ENCODE measurements at regions of chr11 and their contacts with region 1.

Region 1: GRCh38 chr11:44854086-44854485 is 96.6 kb downstream of the TP53I11 start:
- DNase-seq: no peak
- H3K4me3 ChIP-seq: no peak overlapping the region
- CTCF ChIP-seq: no peak

Region 2: GRCh38 chr11:44785856-44786606 is 68.1 kb before region 1 on chr11:
- in situ Hi-C with region 1: no loop called
- DNase-seq: no peak
- H3K4me3 ChIP-seq: no peak overlapping the region
- CTCF ChIP-seq: no peak

Region 3: GRCh38 chr11:44797941-44798606 is 56.0 kb before region 1 on chr11:
- in situ Hi-C with region 1: loop called (anchors 5 kb)
- DNase-seq: no peak
- H3K4me3 ChIP-seq: no peak overlapping the region
- CTCF ChIP-seq: no peak